Stomach (tissue), 19 donors: ENCODE measurements at regions of chr13 and their contacts with region 1.

Region 1: GRCh38 chr13:21014502-21015170 is 46.8 kb downstream of the LATS2 start:
- DNase-seq: peak in 1 of 2 donors; percentile 40
- H3K4me3 ChIP-seq: no peak overlapping the region
- H3K27ac ChIP-seq: peak overlapping the region in 4 of 5 donors; percentile 27 to 79 (median 44)
- H3K4me1 ChIP-seq: peaks cover 45 to 84% (median 66%) of the 10 kb centered on the region in 4 donors
- H3K27me3 ChIP-seq: no peaks in the 10 kb centered on the region
- CTCF ChIP-seq: no peak
- EP300 ChIP-seq: no peak
- POLR2A ChIP-seq: no peak

Region 2: DNA sequence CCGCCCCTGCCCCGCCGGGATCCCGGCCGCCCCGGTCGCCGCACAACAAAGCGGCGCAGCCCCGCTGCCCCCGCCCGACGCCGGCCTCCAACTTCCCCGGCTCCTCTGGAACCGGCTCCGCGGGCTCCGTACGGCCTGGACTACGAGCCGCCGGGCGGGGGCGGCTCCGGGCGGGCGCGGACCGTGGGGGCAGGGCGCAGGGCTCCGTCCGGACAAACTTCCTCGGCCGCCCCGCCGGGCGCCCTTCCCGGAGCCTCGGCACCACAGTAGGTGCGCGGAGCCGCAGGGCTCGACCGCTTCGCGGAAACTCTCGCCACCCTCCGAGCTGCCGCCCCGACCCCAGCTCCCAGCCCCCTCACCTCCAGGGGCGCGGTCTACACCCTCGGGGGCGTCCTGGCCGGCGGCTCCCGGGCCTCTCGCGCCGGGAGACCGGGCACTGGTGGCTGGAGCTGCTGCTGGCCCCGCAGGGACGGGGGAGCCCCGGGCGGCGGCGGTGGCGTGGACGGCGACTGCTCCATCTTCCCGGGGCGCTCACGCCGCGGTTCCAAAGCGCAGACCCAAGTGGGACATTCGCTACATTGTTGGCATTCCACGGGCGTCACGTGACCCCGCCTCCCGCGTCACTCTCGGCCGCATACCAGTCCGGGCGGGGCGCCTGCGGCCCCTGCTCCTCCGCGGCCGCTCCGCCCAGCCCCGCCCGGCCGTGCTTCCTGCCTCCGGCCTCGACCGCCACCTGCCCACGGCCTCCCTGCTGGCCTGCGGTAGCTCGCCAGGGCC is 46.5 kb after region 1 on chr13 and contains the start of gene LATS2:
- intact Hi-C with region 1: loop called (anchors 10 kb)
- DNase-seq: peak; percentile 97 to 98
- H3K4me3 ChIP-seq: peak within 1 kb of the TSS; percentile 72 to 99 (median 81)
- H3K27ac ChIP-seq: peak within 1 kb of the TSS; percentile 97 to 100 (median 99)
- H3K4me1 ChIP-seq: peaks cover 22 to 47% (median 34%) of the 10 kb centered on the region in 4 donors
- H3K27me3 ChIP-seq: no peaks in the 10 kb centered on the region
- CTCF ChIP-seq: peak in 3 of 7 experiments; percentile 6 to 24 (median 20)
- EP300 ChIP-seq: no peak
- POLR2A ChIP-seq: peak in 1 of 4 donors; percentile 64
- total RNA-seq, gene LATS2: 4.7 to 21.4 (median 13.5) TPM